ENCODE measurements at regions of chr9 and their contacts with region 1.

Region 1: GRCh38 chr9:136122425-136123383 is 4.0 kb upstream of the TMEM250 start:
- DNase-seq: peak; percentile 84
- ATAC-seq: peak; percentile 11
- H3K4me3 Mint-ChIP-seq: no peak overlapping the region
- H3K27ac Mint-ChIP-seq: no peak overlapping the region
- H3K4me1 Mint-ChIP-seq: no peaks in the 10 kb centered on the region
- H3K27me3 Mint-ChIP-seq: no peaks in the 10 kb centered on the region
- CTCF ChIP-seq: peak; percentile 83

Region 2: DNA sequence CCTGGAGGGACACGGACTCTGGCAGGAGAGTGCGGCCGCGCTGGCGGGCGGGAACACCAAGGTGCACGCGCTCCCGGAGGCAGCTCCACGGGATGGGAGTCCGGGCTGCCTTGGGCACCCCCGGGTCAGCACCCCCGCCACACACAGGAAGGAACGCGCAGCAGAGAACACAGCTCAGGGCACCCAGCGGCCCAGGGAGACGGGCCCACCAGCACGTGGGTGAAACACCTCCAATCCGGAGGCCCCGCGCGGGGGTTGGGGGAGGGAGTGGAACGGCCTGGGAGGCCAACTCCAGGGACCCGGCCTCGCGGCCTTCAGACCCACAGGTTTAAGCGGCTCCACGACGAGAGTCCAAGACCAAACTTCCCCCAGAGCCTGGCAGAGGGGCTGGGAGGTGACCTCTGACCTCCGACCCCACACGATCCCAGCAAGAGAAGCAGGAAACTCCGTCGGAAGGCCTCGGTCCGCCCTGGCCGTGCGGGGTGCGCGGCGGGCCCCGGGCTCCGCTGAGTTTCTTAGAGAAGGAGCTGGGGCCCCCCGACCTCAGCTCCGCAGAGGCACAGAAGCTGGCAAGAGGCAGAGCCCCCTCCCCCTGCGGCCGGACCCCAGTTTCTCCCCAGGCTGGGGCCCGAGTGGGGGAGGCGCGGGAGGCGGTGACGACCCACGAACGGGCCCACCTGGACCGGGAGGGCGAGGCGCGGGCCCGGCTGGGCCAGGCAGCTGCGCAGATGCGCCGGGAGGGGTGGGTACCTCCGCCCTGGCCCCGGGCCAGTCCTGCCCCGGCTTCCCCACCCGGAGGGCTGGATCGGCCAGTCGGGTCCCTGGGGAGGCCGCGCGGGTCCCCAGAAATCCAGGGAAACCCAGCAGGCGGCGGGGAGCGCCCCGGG is 28.5 kb before region 1 on chr9:
- CTCF ChIA-PET with region 1: interaction called, 14 read pairs
- POLR2A ChIA-PET with region 1: no interaction called
- DNase-seq: no peak
- ATAC-seq: peak; percentile 2; the same call in 1 of the 2 replicates
- H3K4me3 Mint-ChIP-seq: peak overlapping the region; percentile 63
- H3K27ac Mint-ChIP-seq: no peak overlapping the region
- H3K4me1 Mint-ChIP-seq: peaks cover 27% of the 10 kb centered on the region
- H3K27me3 Mint-ChIP-seq: peaks cover 43% of the 10 kb centered on the region
- CTCF ChIP-seq: no peak

Region 3: DNA sequence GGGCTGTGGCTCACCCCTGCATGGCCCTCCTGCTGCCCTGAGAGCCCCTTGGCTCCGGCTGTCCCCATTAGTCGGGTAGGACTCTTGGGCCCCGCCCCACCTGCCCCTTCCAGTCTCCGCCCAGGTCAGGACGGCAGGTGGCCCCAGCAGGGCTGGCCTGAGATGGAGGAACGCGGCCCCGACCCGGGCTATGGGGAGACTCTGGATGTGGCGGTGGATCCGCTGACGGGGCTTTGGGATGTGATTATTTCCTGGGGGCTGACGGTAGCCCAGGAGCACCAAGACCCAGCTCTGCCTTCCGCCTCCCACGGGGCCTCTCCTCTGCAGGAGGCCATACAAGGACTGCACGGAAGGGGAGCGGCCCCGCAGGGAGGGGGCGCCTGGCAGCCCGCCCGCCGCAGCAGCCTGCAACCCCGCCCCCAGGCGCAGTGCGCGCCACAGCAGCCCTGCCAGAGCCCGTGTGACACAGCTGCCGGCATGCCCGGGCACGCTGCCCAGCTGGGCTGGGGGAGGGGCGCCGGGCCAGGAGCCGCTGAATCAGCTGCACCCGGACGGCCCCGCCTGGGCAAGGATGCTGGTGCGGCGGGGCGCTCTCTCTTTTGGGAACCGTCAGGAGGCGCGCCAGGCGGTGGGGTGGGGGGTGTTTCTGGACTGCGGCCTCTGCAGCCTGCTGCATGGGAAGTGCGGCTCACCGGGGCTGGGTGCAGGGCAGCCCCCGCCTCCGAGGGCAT is 13.2 kb before region 1 on chr9:
- CTCF ChIA-PET with region 1: interaction called, 11 read pairs
- POLR2A ChIA-PET with region 1: no interaction called
- DNase-seq: peak; percentile 80
- ATAC-seq: peak; percentile 74
- H3K4me3 Mint-ChIP-seq: peak overlapping the region; percentile 53
- H3K27ac Mint-ChIP-seq: no peak overlapping the region
- H3K4me1 Mint-ChIP-seq: peaks cover 51% of the 10 kb centered on the region
- H3K27me3 Mint-ChIP-seq: no peaks in the 10 kb centered on the region
- CTCF ChIP-seq: no peak

Measured in WTC11 (cell line).